CD4-positive, alpha-beta T cell (primary cell): ENCODE measurements at regions of chr3 and their contacts with region 1.

Region 1: GRCh38 chr3:112984485-112984884 is 6.3 kb upstream of the GTPBP8 start:
- DNase-seq: peak in 10 of 14 experiments; percentile 9 to 69 (median 34)
- ATAC-seq: peak; percentile 67
- H3K4me3 ChIP-seq: no peak overlapping the region
- H3K4me3 Mint-ChIP-seq: peak overlapping the region; percentile 30
- H3K27ac ChIP-seq: peak overlapping the region in 1 of 2 donors; percentile 19
- H3K27ac Mint-ChIP-seq: peak overlapping the region; percentile 72
- H3K4me1 ChIP-seq: peaks cover 28% of the 10 kb centered on the region
- H3K4me1 Mint-ChIP-seq: peaks cover 67% of the 10 kb centered on the region
- H3K27me3 ChIP-seq: no peaks in the 10 kb centered on the region
- H3K27me3 Mint-ChIP-seq: no peaks in the 10 kb centered on the region
- CTCF ChIP-seq: no peak

Region 2: DNA sequence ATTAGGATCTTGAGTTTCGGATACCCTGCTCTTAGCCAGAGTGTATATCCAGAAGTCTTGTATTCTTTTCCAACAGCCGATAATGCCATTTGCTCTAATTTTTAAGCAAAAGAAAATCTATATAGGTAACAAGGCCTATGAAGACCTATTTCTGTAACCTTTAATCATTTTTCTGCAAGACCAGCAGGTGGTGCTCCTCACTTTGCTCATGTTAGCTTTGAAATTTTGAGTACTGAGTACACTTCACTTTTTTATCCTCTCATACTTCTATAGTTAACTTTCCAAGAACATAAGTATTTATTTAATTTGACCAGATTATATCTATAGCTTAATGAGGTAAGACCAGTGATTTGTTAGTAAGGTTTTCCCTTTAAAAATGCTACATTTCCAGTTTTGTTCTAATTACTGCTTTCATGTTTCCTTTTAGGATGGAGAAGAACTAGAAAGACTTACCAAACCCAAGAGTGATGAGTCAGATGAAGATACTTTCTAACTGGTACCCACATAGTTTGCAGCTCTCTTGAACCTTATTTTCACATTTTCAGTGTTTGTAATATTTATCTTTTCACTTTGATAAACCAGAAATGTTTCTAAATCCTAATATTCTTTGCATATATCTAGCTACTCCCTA is 402.1 kb before region 1 on chr3:
- CTCF ChIA-PET with region 1: interaction called, 3 read pairs
- POLR2A ChIA-PET with region 1: no interaction called
- intact Hi-C with region 1: loop called in 1 of 2 experiments (anchors 5 kb)
- DNase-seq: peak in 6 of 14 experiments; percentile 2 to 60 (median 30)
- ATAC-seq: no peak
- H3K4me3 ChIP-seq: no peak overlapping the region
- H3K4me3 Mint-ChIP-seq: no peak overlapping the region
- H3K27ac ChIP-seq: no peak overlapping the region
- H3K27ac Mint-ChIP-seq: peak overlapping the region; percentile 36
- H3K4me1 ChIP-seq: no peaks in the 10 kb centered on the region
- H3K4me1 Mint-ChIP-seq: peaks cover 5% of the 10 kb centered on the region
- H3K27me3 ChIP-seq: no peaks in the 10 kb centered on the region
- H3K27me3 Mint-ChIP-seq: no peaks in the 10 kb centered on the region
- CTCF ChIP-seq: peak; percentile 43